Naive thymus-derived CD4-positive, alpha-beta T cell (primary cell): ENCODE measurements at regions of chr16 and their contacts with region 1.

Region 1: GRCh38 chr16:10944249-10945064 is at the start of gene CLEC16A:
- DNase-seq: peak; percentile 92 to 97 (median 94)
- ATAC-seq: peak; percentile 86
- H3K4me3 ChIP-seq: peak within 1 kb of the TSS; percentile 82
- H3K4me3 Mint-ChIP-seq: peak within 1 kb of the TSS; percentile 83 to 96 (median 92)
- H3K27ac ChIP-seq: peak within 1 kb of the TSS; percentile 88
- H3K27ac Mint-ChIP-seq: peak within 1 kb of the TSS; percentile 41 to 92 (median 81)
- H3K4me1 ChIP-seq: peaks cover 34 to 53% of the 10 kb centered on the region in 2 donors
- H3K4me1 Mint-ChIP-seq: peaks cover 43 to 85% (median 70%) of the 10 kb centered on the region in 7 donors
- H3K27me3 ChIP-seq: no peaks in the 10 kb centered on the region
- H3K27me3 Mint-ChIP-seq: no peaks in the 10 kb centered on the region
- total RNA-seq, gene CLEC16A: 28.2 to 38.2 (median 34.0) TPM

Region 2: GRCh38 chr16:8963825-8964441 is 1980.5 kb before region 1 on chr16 and contains the start of gene USP7:
- CTCF ChIA-PET with region 1: no interaction called
- POLR2A ChIA-PET with region 1: no interaction called
- intact Hi-C with region 1: loop called in 1 of 2 experiments (anchors 5 kb)
- DNase-seq: peak; percentile 86 to 94 (median 92)
- ATAC-seq: peak; percentile 94
- H3K4me3 ChIP-seq: peak within 1 kb of the TSS; percentile 77
- H3K4me3 Mint-ChIP-seq: peak within 1 kb of the TSS; percentile 90 to 98 (median 95)
- H3K27ac ChIP-seq: peak within 1 kb of the TSS; percentile 85
- H3K27ac Mint-ChIP-seq: peak within 1 kb of the TSS; percentile 80 to 97 (median 92)
- H3K4me1 ChIP-seq: peaks cover 30 to 34% of the 10 kb centered on the region in 2 donors
- H3K4me1 Mint-ChIP-seq: peaks cover 35 to 42% (median 40%) of the 10 kb centered on the region in 7 donors
- H3K27me3 ChIP-seq: no peaks in the 10 kb centered on the region
- H3K27me3 Mint-ChIP-seq: peaks cover 0 to 18% (median 0%) of the 10 kb centered on the region in 5 donors
- total RNA-seq, gene USP7: 175 to 261 (median 178) TPM

Region 3: DNA sequence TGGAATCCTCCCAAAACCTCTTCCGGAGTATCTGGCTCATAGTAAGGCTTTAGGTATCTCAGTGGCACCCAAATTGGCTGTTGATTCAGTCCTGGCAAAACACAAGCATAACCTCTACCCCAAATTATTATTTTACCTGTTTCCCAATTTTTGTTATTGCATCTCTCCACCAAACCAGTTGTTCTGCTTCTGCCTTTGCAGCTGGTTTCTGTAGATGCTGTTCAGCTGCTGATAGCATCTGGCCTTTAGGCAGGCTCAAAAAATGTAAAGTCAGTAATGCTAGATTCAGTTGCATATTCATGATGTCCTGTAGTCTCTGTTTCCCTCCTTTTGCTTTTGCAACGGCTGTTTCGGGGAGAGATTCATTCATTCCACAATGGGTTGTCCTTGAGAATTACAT is 524.7 kb before region 1 on chr16:
- CTCF ChIA-PET with region 1: no interaction called
- POLR2A ChIA-PET with region 1: no interaction called
- intact Hi-C with region 1: no loop called
- DNase-seq: no peak
- ATAC-seq: no peak
- H3K4me3 ChIP-seq: no peak overlapping the region
- H3K4me3 Mint-ChIP-seq: no peak overlapping the region
- H3K27ac ChIP-seq: no peak overlapping the region
- H3K27ac Mint-ChIP-seq: no peak overlapping the region
- H3K4me1 ChIP-seq: no peaks in the 10 kb centered on the region
- H3K4me1 Mint-ChIP-seq: peaks cover 0 to 5% (median 0%) of the 10 kb centered on the region in 7 donors
- H3K27me3 ChIP-seq: no peaks in the 10 kb centered on the region
- H3K27me3 Mint-ChIP-seq: no peaks in the 10 kb centered on the region

Region 4: GRCh38 chr16:10743610-10744393 is 200.7 kb before region 1 on chr16 and contains the start of gene NUBP1:
- CTCF ChIA-PET with region 1: no interaction called
- POLR2A ChIA-PET with region 1: interaction called, 5 read pairs
- intact Hi-C with region 1: loop called (anchors 1 kb)
- DNase-seq: peak; percentile 97 to 99 (median 99)
- ATAC-seq: peak; percentile 98
- H3K4me3 ChIP-seq: peak within 1 kb of the TSS; percentile 74
- H3K4me3 Mint-ChIP-seq: peak within 1 kb of the TSS; percentile 84 to 99 (median 95)
- H3K27ac ChIP-seq: peak within 1 kb of the TSS; percentile 92
- H3K27ac Mint-ChIP-seq: peak within 1 kb of the TSS; percentile 98 to 100 (median 99)
- H3K4me1 ChIP-seq: peaks cover 7 to 10% of the 10 kb centered on the region in 2 donors
- H3K4me1 Mint-ChIP-seq: peaks cover 15 to 48% (median 27%) of the 10 kb centered on the region in 7 donors
- H3K27me3 ChIP-seq: no peaks in the 10 kb centered on the region
- H3K27me3 Mint-ChIP-seq: peaks cover 0 to 2% (median 0%) of the 10 kb centered on the region in 5 donors
- total RNA-seq, gene NUBP1: 24.0 to 30.0 (median 25.5) TPM

Region 5: DNA sequence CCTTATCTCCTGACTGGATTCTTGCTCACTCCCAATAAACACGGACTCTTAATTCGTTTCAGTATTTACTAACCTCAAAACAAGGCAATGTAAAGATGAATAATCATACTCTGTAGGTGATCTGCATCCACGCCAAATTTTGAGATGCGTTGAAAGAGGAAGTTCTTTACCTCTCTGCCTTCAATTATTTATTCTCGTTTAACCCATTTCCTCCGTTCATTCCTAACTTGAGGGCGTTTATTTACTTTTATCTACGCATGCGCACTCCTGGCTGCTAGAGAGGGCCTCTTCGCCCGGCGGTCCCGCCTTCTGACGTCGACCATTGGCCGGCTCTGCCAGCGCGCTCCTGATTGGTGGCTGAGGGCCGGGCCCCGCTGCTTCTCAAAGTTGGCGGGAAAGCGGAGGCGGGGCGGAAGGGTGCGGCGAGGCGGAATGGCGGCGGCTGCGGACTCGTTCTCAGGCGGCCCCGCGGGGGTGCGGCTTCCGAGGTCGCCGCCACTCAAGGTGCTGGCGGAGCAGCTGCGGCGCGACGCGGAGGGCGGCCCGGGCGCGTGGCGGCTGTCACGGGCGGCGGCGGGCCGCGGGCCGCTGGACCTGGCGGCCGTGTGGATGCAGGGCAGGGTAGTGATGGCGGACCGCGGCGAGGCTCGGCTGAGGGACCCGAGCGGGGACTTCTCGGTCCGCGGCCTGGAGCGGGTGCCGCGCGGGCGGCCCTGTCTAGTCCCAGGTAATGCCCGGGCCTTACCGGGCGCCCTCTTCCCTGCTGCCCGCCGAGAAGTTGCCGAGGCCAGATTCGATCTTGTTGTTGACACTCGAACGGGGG is 400.8 kb after region 1 on chr16 and contains the start of gene RMI2:
- CTCF ChIA-PET with region 1: no interaction called
- POLR2A ChIA-PET with region 1: interaction called, 5 read pairs
- intact Hi-C with region 1: loop called in 1 of 2 experiments (anchors 1 kb)
- DNase-seq: peak; percentile 90 to 98 (median 95)
- ATAC-seq: peak; percentile 99
- H3K4me3 ChIP-seq: peak within 1 kb of the TSS; percentile 44
- H3K4me3 Mint-ChIP-seq: peak within 1 kb of the TSS; percentile 79 to 98 (median 92)
- H3K27ac ChIP-seq: peak within 1 kb of the TSS; percentile 65
- H3K27ac Mint-ChIP-seq: peak within 1 kb of the TSS; percentile 58 to 99 (median 83)
- H3K4me1 ChIP-seq: no peaks in the 10 kb centered on the region
- H3K4me1 Mint-ChIP-seq: peaks cover 10 to 49% (median 24%) of the 10 kb centered on the region in 7 donors
- H3K27me3 ChIP-seq: no peaks in the 10 kb centered on the region
- H3K27me3 Mint-ChIP-seq: no peaks in the 10 kb centered on the region
- total RNA-seq, gene RMI2: 1.8 to 57.0 (median 3.3) TPM

Region 6: GRCh38 chr16:11797166-11797956 is 852.9 kb after region 1 on chr16 and contains the start of gene ZC3H7A:
- CTCF ChIA-PET with region 1: no interaction called
- POLR2A ChIA-PET with region 1: interaction called, 3 read pairs
- intact Hi-C with region 1: loop called (anchors 1 kb)
- DNase-seq: peak; percentile 91 to 97 (median 95)
- ATAC-seq: peak; percentile 95
- H3K4me3 ChIP-seq: peak within 1 kb of the TSS; percentile 82
- H3K4me3 Mint-ChIP-seq: peak within 1 kb of the TSS; percentile 90 to 97 (median 94)
- H3K27ac ChIP-seq: peak within 1 kb of the TSS; percentile 97
- H3K27ac Mint-ChIP-seq: peak within 1 kb of the TSS; percentile 93 to 99 (median 98)
- H3K4me1 ChIP-seq: peaks cover 41 to 63% of the 10 kb centered on the region in 2 donors
- H3K4me1 Mint-ChIP-seq: peaks cover 55 to 84% (median 78%) of the 10 kb centered on the region in 7 donors
- H3K27me3 ChIP-seq: no peaks in the 10 kb centered on the region
- H3K27me3 Mint-ChIP-seq: no peaks in the 10 kb centered on the region
- total RNA-seq, gene ZC3H7A: 86.9 to 102 (median 88.6) TPM

Region 7: DNA sequence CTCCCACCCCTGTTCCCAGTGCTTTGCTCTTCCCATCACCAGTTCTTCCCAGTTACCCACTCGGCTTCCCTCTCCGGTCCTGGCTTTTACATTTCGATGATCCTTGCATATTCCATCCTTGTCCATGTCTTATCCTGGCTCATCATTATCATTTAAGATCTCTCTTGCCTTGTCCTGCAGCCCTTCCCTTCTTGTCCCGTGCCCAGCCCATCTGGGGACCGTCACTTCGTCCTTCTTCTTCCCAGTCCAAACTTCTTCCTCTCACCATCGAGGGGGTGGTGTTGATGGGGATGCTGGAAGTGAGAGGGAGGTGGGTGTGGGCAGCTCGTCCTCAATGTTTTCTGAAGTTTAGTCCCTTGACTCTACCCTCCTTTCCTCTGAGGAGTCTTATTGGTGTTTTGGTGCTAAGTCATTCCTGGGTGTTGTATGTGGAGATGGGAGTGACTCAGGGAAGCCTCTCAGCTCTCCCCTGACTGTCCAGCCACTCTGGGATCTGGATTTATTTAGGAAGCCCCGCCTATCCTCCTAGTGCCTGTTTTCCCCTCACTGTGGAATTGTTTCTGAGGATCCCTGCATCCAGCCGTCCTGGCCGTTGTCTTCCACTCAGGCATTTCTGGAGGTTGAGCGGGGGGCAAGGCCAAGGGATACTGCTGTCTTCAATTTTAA is 1033.1 kb after region 1 on chr16:
- CTCF ChIA-PET with region 1: no interaction called
- POLR2A ChIA-PET with region 1: no interaction called
- intact Hi-C with region 1: loop called in 1 of 2 experiments (anchors 10 kb)
- DNase-seq: no peak
- ATAC-seq: no peak
- H3K4me3 ChIP-seq: peak overlapping the region; percentile 71
- H3K4me3 Mint-ChIP-seq: peak overlapping the region; percentile 85 to 99 (median 94)
- H3K27ac ChIP-seq: peak overlapping the region; percentile 88
- H3K27ac Mint-ChIP-seq: peak overlapping the region; percentile 60 to 97 (median 93)
- H3K4me1 ChIP-seq: peaks cover 11 to 19% of the 10 kb centered on the region in 2 donors
- H3K4me1 Mint-ChIP-seq: peaks cover 33 to 55% (median 42%) of the 10 kb centered on the region in 7 donors
- H3K27me3 ChIP-seq: no peaks in the 10 kb centered on the region
- H3K27me3 Mint-ChIP-seq: no peaks in the 10 kb centered on the region